ENCODE measurements at regions of chr3 and their contacts with region 1.

Region 1: DNA sequence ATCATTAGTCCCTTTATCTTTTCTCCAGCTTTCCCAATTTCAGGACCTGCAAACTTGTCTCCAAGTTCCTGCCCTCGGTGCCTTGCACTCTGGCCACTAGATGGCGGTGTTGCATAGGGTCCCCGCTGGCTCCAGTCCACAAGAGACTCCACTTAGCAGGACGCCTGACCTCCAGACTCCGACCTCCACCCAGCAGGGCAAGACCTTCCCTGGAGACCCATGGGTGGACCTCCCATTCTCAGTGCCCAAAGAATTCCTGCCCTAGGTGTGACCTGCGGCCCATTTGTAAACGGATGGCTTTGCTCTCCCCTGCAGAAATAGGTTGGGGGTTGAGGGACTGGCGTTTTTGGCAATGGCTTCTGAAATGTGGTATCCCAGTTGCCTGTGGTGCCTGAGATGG is 82.6 kb downstream of the LSM3 start:
- DNase-seq: peak; percentile 77
- H3K4me3 ChIP-seq: no peak overlapping the region
- H3K27ac ChIP-seq: no peak overlapping the region
- H3K4me1 ChIP-seq: no peaks in the 10 kb centered on the region
- H3K27me3 ChIP-seq: no peaks in the 10 kb centered on the region
- CTCF ChIP-seq: peak; percentile 95 to 99 (median 96)
- POLR2A ChIP-seq: no peak

Region 2: GRCh38 chr3:14203521-14204079 is 57.6 kb before region 1 on chr3:
- intact Hi-C with region 1: loop called (anchors 5 kb)
- DNase-seq: peak; percentile 69
- H3K4me3 ChIP-seq: no peak overlapping the region
- H3K27ac ChIP-seq: no peak overlapping the region
- H3K4me1 ChIP-seq: peaks cover 6% of the 10 kb centered on the region
- H3K27me3 ChIP-seq: no peaks in the 10 kb centered on the region
- CTCF ChIP-seq: peak; percentile 83 to 93 (median 90)
- POLR2A ChIP-seq: no peak

Region 3: GRCh38 chr3:14391033-14391432 is 129.8 kb after region 1 on chr3:
- intact Hi-C with region 1: loop called (anchors 10 kb)
- DNase-seq: no peak
- H3K4me3 ChIP-seq: no peak overlapping the region
- H3K27ac ChIP-seq: no peak overlapping the region
- H3K4me1 ChIP-seq: no peaks in the 10 kb centered on the region
- H3K27me3 ChIP-seq: no peaks in the 10 kb centered on the region
- CTCF ChIP-seq: no peak
- POLR2A ChIP-seq: no peak

Region 4: DNA sequence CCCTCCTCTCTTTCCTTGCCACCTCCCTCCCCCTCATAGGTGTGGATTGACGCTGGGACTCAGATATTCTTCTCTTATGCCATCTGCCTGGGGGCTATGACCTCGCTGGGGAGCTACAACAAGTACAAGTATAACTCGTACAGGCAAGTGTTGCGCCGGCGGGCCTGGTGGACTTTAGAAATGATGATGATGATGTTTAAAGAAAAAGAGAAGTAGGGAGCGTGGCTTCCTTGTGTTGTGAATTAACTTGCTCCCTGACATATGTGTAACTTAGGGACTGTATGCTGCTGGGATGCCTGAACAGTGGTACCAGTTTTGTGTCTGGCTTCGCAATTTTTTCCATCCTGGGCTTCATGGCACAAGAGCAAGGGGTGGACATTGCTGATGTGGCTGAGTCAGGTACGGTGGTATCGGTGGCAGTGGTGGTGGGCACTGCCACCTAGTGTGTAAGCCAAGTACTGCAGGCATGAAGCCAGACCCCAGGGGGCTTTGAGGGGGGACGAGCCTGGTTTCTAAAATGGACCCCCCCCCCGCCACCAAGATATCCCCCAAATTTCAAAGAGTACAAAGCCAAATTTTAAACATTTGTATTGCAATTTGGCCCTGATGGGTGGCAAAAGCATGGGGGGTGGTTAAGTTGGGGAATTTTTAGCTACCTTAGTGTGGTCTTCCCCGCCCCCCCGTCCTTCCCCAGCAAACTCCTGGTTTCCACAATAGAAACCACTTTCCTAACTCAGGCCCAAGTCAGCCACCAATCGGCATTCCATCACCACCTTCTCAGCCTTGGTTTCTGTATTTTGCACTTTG is 206.8 kb after region 1 on chr3:
- intact Hi-C with region 1: loop called (anchors 2 kb)
- DNase-seq: peak; percentile 23
- H3K4me3 ChIP-seq: no peak overlapping the region
- H3K27ac ChIP-seq: no peak overlapping the region
- H3K4me1 ChIP-seq: no peaks in the 10 kb centered on the region
- H3K27me3 ChIP-seq: no peaks in the 10 kb centered on the region
- CTCF ChIP-seq: peak; percentile 84 to 96 (median 94)
- POLR2A ChIP-seq: no peak